Right cardiac atrium (tissue), 5 donors: ENCODE measurements at regions of chr3 and their contacts with region 1.

Region 1: DNA sequence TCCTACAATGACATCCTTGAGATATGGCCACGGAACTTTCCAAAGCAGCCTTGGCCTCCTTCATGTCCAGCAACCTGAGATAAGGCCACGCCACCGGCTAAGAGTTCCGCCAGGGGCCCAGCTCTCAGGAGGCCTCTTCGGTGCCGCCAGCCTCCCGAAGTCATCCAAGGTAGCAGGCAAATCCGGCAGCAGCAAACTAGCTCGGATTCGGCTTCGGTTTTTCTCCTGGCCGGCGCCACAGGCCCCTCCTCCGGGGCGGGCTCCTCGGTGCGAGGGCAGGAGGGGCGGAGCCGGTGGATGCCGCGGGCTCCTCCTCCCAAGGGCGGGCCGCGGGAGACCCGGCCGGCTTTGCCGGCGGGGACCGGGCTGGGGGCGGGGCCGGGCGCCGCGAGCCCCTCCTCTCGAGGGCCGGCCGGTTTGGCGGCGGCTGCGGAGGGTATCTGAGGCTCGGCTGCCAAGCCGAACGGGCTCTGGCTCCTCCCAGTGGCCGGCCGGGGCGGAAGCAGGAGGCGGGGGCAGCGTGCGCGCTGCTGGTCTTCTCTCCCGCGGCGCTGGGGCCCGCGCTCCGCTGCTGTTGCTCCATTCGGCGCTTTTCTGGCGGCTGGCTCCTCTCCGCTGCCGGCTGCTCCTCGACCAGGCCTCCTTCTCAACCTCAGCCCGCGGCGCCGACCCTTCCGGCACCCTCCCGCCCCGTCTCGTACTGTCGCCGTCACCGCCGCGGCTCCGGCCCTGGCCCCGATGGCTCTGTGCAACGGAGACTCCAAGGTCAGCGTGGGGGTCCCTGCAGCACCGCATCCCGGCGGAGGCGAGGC is at the start of gene GMPS:
- DNase-seq: peak; percentile 96 to 99 (median 98)
- ATAC-seq: peak; percentile 98 to 99
- H3K4me3 ChIP-seq: peak within 1 kb of the TSS; percentile 76
- H3K27ac ChIP-seq: peak within 1 kb of the TSS; percentile 99
- H3K4me1 ChIP-seq: no peaks in the 10 kb centered on the region
- H3K27me3 ChIP-seq: no peaks in the 10 kb centered on the region
- total RNA-seq, gene GMPS: 34.2 to 38.3 (median 36.3) TPM

Region 2: DNA sequence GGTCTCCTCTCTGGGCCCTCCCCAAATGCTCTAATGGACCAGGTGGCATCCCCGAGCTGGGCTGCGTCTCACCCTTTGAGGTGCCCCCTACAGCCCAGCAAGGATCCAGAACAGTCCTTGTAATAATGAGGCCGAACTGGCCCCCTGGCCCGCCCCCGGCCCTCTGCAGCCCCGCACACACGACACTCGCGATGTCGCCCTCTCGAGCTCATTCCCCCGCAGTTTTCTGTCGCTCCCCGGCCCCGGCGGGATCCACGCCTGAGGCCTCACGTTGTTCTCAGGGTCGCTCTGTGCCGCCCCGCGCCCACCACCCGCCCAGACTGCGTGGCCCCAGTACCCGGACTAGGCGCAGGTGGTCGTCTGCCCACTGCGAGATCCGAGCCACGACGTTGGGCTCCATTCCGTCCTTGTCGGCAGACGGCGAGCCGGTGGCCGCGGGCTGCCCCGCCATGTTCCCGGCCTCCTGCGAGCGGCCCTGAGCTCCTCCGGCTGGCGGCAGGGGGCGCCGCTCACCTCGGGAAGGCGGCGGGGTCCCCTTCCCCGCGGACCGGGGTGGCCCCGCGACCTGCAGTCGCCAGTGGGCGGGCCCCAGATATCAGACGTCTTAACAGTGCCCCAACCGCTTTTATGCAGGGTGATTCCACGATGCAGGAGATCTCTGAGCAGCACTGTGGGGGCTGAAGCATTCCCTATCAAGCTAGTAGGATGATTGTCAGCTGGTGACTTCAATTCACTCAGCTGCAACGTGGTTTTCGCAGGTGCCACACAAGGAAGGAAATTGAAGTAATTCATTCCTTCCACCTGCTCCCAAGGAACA is 64.3 kb before region 1 on chr3 and contains the start of gene C3orf33:
- intact Hi-C with region 1: loop called in 1 of 4 experiments (anchors 10 kb)
- DNase-seq: peak; percentile 76 to 92 (median 90)
- ATAC-seq: peak; percentile 98 to 99
- H3K4me3 ChIP-seq: peak within 1 kb of the TSS; percentile 65
- H3K27ac ChIP-seq: peak within 1 kb of the TSS; percentile 23
- H3K4me1 ChIP-seq: no peaks in the 10 kb centered on the region
- H3K27me3 ChIP-seq: no peaks in the 10 kb centered on the region
- total RNA-seq, gene C3orf33: 6.1 to 11.0 (median 8.2) TPM

Region 3: DNA sequence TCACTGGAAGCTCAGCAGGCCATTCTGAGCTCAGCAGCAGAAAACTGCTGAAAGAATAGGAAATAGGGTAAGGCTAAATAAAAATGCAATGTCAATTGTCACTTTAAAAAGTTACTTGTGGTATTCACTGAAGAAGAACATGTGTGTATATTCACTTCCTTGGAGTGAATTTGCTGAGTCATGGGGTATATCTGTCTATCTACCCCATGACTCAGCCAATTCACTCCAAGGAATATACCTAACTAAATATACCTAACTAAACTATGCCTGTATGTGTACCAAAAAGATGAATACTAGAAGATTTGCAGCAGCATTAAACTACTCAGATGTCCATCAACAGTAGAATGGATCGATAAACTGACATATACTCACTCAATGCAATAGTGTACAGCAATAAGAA is 180.6 kb after region 1 on chr3:
- intact Hi-C with region 1: no loop called
- DNase-seq: no peak
- ATAC-seq: no peak
- H3K4me3 ChIP-seq: no peak overlapping the region
- H3K27ac ChIP-seq: no peak overlapping the region
- H3K4me1 ChIP-seq: no peaks in the 10 kb centered on the region
- H3K27me3 ChIP-seq: no peaks in the 10 kb centered on the region